ENCODE measurements at regions of chr19 and their contacts with region 1.

Region 1: GRCh38 chr19:12681074-12681951 is at the start of gene DHPS:
- DNase-seq: peak; percentile 89
- H3K4me3 Mint-ChIP-seq: peak within 1 kb of the TSS; percentile 99
- H3K27ac Mint-ChIP-seq: peak within 1 kb of the TSS; percentile 88
- H3K4me1 Mint-ChIP-seq: peaks cover 8% of the 10 kb centered on the region
- H3K27me3 Mint-ChIP-seq: no peaks in the 10 kb centered on the region
- total RNA-seq, gene DHPS: 122 and 134 TPM in 2 replicates

Region 2: DNA sequence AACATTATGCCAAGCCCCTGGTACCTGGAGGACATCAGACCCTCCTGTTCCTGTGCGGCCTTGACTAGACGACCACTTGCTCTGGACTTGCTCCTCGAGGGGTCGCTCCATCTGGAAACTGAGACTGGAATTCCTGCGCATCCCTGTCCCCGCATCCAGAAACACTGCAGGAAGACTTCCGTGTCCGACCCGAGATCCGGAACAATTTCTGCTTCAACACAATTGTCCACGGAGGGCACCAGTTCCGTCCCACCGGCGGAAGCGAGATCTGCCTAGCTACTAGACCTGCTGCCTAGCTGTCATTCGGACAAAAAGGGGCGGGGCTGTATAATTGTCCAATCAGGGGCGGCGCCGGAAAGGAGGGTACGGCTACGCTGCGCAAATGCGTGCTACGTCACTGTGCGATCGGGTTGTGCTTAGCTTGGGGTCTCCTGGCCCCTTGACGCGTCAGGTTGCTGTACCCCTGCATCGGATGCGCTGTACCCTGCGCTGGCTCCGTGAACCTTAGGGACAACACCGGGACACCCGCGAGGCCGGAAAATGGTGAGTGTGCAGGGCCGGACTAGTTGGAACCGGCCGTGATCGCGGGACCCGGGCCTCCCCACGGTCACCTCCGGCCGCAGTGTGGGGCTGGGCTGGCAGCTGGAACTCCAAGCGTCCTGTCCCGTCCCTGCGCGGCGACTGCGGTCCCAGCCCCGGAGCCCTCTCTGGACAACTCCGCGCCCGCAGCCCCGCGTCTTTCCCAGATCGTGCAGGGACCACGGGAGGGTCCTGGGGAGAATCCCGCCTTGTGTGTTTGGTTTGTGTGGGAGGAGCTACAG is 70.6 kb before region 1 on chr19 and contains the starts of genes ZNF490 and ZNF791:
- intact Hi-C with region 1: loop called (anchors 5 kb)
- DNase-seq: peak; percentile 95
- H3K4me3 Mint-ChIP-seq: peak within 1 kb of the TSS; percentile 99
- H3K27ac Mint-ChIP-seq: peak within 1 kb of the TSS; percentile 97
- H3K4me1 Mint-ChIP-seq: peaks cover 18% of the 10 kb centered on the region
- H3K27me3 Mint-ChIP-seq: no peaks in the 10 kb centered on the region
- total RNA-seq, gene ZNF490: 7.0 and 9.9 TPM in 2 replicates
- total RNA-seq, gene ZNF791: 21.8 and 22.5 TPM in 2 replicates

Region 3: DNA sequence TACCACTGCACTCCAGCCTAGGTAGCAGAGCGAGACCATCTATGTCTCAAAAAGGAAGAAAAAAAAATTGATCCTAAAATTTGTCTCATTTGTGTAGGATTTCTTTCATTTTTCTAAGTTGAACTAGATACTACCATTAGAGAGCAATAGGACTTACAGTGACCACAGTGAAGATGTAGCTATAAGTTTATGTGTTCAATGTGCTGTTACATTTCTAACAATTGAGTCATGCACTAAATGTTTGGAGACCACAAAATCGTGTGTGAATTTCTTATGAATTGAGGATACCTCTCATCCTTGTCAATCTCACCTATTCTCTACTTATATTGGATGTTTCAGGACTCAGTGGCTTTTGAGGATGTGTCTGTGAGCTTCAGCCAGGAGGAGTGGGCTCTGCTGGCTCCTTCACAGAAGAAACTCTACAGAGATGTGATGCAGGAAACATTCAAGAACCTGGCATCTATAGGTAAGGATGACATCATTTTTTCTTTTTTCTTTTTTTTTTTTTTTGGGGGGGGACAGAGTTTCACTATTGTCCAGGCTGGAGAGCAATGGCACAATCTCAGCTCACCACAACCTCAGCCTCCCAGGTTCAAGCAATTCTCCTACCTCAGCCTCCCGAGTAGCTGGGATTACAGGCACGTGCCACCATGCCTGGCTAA is 57.8 kb before region 1 on chr19:
- intact Hi-C with region 1: no loop called
- DNase-seq: no peak
- H3K4me3 Mint-ChIP-seq: no peak overlapping the region
- H3K27ac Mint-ChIP-seq: no peak overlapping the region
- H3K4me1 Mint-ChIP-seq: no peaks in the 10 kb centered on the region
- H3K27me3 Mint-ChIP-seq: no peaks in the 10 kb centered on the region

Region 4: DNA sequence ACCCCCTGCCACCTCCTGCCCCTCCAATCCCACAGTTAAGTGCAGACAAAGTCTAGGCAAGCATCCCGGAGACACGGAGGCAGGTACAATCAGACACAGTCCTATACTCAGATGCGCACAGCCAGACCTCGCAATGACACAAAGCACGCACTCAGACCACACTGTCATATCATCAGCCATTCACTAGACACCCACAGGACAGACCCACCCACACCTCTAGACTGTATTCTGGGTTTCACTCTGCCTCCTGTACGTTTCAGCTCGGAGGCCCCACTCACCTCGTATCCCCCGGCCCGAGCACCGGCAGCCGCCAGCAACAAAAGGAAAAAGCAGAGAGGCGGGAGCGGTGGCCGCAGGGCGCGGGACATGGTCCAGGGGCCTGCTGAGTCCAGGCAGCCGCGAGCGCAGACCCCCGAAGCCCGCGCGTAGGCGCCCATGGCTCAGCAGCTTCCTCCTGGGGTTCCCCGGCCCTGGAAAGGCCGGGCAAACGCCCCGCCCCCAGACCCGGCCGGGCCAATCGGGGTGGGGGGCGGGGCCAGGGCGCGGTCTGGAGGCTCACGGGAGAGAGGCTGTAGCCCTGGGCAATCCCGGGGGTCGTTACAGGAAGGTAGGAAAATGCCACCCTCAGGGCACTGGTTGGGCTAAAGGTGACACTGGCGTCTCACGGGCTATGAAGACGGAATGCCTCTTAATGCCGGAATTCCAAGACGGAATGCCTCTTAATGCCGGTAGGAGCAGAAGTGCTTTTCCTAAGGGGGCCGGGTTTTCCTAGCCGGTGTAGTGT is 14.9 kb before region 1 on chr19 and contains the starts of genes MAN2B1 and WDR83:
- intact Hi-C with region 1: loop called (anchors 1 kb)
- DNase-seq: peak; percentile 73
- H3K4me3 Mint-ChIP-seq: peak within 1 kb of the TSS; percentile 93
- H3K27ac Mint-ChIP-seq: peak within 1 kb of the TSS; percentile 91
- H3K4me1 Mint-ChIP-seq: peaks cover 37% of the 10 kb centered on the region
- H3K27me3 Mint-ChIP-seq: no peaks in the 10 kb centered on the region
- total RNA-seq, gene MAN2B1: 133 and 147 TPM in 2 replicates
- total RNA-seq, gene WDR83: 23.1 and 23.7 TPM in 2 replicates

Region 5: DNA sequence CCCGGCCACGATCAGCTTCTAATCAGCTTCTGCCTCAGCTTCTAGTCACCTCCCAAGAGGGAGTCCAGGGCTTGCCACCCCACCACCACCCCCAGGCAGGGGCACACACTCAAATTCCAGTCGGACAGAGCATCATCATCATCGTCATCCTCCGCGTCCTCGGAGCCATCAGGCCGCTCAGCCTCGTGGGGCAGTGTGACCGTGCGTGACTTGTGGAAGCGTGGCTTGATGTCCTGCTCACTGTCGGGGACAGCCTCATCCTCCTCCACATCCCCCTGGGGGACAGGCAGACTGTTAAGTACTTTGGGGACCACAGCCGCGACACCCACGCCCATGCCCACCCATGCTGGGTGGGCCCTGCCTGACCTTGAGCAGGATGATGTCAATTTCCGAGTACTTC is 29.9 kb after region 1 on chr19:
- intact Hi-C with region 1: no loop called
- DNase-seq: no peak
- H3K4me3 Mint-ChIP-seq: no peak overlapping the region
- H3K27ac Mint-ChIP-seq: no peak overlapping the region
- H3K4me1 Mint-ChIP-seq: no peaks in the 10 kb centered on the region
- H3K27me3 Mint-ChIP-seq: no peaks in the 10 kb centered on the region

Region 6: DNA sequence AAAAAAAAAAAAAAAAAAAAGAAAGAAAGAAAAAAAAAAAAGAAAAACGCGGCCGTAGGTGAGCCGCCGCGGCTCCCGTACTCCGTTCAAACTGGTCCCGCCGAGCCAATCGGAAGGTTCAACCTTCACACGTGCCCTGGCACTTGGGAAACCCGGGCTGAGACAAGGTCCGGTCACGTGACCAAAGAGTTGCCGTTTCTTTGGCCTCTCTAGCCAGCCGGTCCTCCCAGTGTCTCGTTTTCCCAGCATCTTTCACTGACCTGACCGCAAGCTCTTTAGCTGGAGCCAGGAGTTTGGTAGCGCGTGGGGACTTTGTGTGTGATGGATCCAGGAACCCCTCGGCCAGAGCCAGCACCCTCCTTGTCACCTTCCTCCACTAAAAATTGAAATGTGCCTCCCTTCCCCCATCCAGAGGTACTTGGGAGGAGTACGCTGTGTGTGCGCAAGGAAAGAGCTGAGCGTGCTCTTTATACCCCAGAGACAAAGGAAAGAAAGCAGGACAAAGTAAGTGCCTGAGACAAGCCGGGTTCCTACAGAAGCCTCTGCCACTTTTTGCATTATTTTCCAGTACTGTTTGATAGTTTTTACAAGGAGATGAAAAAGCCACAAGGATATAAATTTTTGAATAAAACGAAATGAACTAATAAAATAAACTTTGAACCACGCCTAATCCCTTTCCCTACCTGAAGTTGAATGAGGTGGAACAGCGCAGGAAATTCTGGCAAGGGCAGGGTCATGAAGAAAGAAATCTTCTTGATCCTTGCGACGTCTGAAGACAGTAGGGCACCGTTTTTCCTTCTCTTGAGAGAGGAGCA is 41.5 kb after region 1 on chr19:
- intact Hi-C with region 1: loop called (anchors 1 kb)
- DNase-seq: peak; percentile 92
- H3K4me3 Mint-ChIP-seq: peak overlapping the region; percentile 92
- H3K27ac Mint-ChIP-seq: peak overlapping the region; percentile 90
- H3K4me1 Mint-ChIP-seq: peaks cover 17% of the 10 kb centered on the region
- H3K27me3 Mint-ChIP-seq: no peaks in the 10 kb centered on the region

Region 7: GRCh38 chr19:12789904-12790619 is 108.7 kb after region 1 on chr19:
- intact Hi-C with region 1: loop called (anchors 5 kb)
- DNase-seq: peak; percentile 95
- H3K4me3 Mint-ChIP-seq: peak overlapping the region; percentile 95
- H3K27ac Mint-ChIP-seq: peak overlapping the region; percentile 93
- H3K4me1 Mint-ChIP-seq: peaks cover 24% of the 10 kb centered on the region
- H3K27me3 Mint-ChIP-seq: no peaks in the 10 kb centered on the region

Measured in activated T-helper 2 cell treated with anti-CD3 and anti-CD28 coated beads, Interferon-gamma antibody, Interleukin-2, Interleukin-4, amounts not matched to agents 10 μg/mL and 5 μg/mL and 100 μg/mL, durations not matched to agents 14 hours and 24 hours and 36 hours (primary cell).